B cell (primary cell): ENCODE measurements at regions of chr15 and their contacts with region 1.

Region 1: DNA sequence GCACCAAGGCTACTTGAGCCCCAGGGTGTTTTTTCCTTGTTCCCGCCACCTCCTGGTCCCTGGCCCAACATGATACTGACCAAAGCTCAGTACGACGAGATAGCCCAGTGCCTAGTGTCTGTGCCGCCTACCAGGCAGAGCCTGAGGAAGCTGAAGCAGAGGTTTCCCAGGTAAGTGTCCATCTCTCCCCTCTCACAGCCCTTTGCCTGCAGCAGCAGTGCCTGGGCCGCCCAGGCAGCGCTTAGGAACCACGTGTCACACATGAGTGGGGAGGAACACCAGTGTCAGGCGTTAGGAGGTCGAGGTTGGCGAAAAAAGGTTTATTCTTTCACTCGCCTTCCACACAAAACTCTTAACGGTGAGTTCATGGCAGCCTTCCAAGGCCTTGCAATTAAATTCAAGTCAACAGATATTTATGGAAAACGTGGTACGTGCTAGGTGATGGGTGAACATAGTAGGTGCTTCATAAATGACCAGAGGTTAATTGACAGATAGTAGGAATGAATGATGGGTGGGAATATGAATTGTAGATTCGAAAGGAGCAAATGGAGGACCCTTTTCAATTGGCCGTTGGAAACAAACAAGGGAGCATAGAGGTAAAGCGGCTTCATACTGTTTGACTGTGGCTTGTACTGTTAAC is 486 bp downstream of the CDIN1 start:
- DNase-seq: no peak
- ATAC-seq: no peak
- H3K4me3 ChIP-seq: peak overlapping the region; percentile 83 to 96 (median 89)
- H3K4me3 Mint-ChIP-seq: peak overlapping the region; percentile 95
- H3K27ac ChIP-seq: peak overlapping the region; percentile 85 to 94
- H3K27ac Mint-ChIP-seq: peak overlapping the region; percentile 96
- H3K4me1 ChIP-seq: peaks cover 6 to 7% of the 10 kb centered on the region in 2 donors
- H3K4me1 Mint-ChIP-seq: peaks cover 26% of the 10 kb centered on the region
- H3K27me3 ChIP-seq: no peaks in the 10 kb centered on the region
- H3K27me3 Mint-ChIP-seq: no peaks in the 10 kb centered on the region
- CTCF ChIP-seq: no peak

Region 2: DNA sequence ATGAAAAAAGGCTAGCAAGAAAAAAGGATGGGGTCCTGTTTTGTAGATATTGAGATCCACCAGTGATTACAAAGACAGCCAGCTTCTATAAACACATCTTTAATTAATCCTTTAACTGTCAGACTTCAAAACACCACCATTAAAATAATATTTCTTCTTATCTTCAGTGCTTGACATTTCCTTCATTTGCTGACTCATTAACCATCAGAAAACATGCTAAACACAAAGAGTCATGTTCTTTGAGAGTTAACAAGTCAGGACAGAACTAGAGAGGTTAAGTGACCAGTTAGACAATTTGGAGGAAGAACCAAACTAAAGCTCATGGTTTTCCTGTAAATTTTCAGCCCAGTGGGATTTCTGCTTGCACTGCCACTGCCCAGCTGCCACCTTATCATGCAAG is 409.0 kb after region 1 on chr15:
- CTCF ChIA-PET with region 1: no interaction called
- POLR2A ChIA-PET with region 1: no interaction called
- intact Hi-C with region 1: no loop called
- DNase-seq: no peak
- ATAC-seq: no peak
- H3K4me3 ChIP-seq: no peak overlapping the region
- H3K4me3 Mint-ChIP-seq: no peak overlapping the region
- H3K27ac ChIP-seq: no peak overlapping the region
- H3K27ac Mint-ChIP-seq: no peak overlapping the region
- H3K4me1 ChIP-seq: no peaks in the 10 kb centered on the region
- H3K4me1 Mint-ChIP-seq: no peaks in the 10 kb centered on the region
- H3K27me3 ChIP-seq: no peaks in the 10 kb centered on the region
- H3K27me3 Mint-ChIP-seq: no peaks in the 10 kb centered on the region
- CTCF ChIP-seq: no peak

Region 3: DNA sequence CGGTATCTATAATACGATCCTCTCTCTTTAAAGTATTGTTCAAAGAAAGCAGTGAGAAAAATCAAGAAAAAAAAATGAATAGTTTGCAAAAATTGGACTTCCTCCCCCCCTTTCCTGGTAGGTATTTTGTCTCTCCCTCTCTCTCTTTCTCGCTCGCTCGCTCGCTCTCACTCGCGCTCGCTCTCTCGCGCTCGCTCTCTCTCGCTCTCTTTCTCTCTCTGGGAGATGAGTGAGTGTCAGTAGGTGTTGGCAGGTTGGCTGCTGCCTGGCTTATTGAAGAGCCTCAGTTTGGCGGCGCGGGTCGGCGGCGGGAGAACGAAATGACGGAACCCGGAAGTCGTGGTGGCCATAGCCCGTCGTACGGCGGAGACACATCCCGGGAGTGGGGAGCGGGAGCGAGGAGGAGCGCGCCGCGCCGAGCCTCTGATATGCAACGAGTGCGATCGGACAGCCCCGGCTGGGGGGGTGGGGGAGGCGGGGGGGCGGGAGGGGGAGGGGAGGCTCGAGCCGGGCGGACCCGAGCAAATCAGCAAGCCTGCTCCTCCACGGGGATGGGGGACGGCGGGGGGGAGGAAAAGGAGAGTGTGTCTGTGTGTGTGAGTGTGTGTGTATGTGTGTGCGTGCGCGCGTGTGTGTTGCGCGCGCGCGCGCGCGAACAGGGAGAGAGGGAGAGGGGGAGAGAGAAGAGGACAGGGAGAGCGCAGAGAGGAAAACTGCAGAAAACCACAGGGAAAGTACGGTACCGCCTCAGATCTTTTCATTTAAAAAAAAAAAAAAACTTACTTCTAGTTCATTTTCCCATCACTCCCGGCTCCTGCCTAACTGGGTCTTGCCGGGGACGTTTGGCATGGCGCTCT is 520.4 kb after region 1 on chr15 and contains the start of gene MEIS2:
- CTCF ChIA-PET with region 1: no interaction called
- POLR2A ChIA-PET with region 1: no interaction called
- intact Hi-C with region 1: loop called (anchors 5 kb)
- DNase-seq: peak; percentile 56
- ATAC-seq: peak; percentile 26
- H3K4me3 ChIP-seq: peak within 1 kb of the TSS; percentile 52 to 83 (median 64)
- H3K4me3 Mint-ChIP-seq: peak within 1 kb of the TSS; percentile 94
- H3K27ac ChIP-seq: no peak within 1 kb of the TSS
- H3K27ac Mint-ChIP-seq: peak within 1 kb of the TSS; percentile 68
- H3K4me1 ChIP-seq: peaks cover 41 to 46% of the 10 kb centered on the region in 2 donors
- H3K4me1 Mint-ChIP-seq: peaks cover 49% of the 10 kb centered on the region
- H3K27me3 ChIP-seq: peaks cover 0 to 84% (median 57%) of the 10 kb centered on the region in 4 experiments
- H3K27me3 Mint-ChIP-seq: peaks cover 79% of the 10 kb centered on the region
- CTCF ChIP-seq: no peak
- total RNA-seq, gene MEIS2: 0.22 and 0.39 TPM in 2 replicates